ENCODE measurements at regions of chr3 and their contacts with region 1.

Region 1: DNA sequence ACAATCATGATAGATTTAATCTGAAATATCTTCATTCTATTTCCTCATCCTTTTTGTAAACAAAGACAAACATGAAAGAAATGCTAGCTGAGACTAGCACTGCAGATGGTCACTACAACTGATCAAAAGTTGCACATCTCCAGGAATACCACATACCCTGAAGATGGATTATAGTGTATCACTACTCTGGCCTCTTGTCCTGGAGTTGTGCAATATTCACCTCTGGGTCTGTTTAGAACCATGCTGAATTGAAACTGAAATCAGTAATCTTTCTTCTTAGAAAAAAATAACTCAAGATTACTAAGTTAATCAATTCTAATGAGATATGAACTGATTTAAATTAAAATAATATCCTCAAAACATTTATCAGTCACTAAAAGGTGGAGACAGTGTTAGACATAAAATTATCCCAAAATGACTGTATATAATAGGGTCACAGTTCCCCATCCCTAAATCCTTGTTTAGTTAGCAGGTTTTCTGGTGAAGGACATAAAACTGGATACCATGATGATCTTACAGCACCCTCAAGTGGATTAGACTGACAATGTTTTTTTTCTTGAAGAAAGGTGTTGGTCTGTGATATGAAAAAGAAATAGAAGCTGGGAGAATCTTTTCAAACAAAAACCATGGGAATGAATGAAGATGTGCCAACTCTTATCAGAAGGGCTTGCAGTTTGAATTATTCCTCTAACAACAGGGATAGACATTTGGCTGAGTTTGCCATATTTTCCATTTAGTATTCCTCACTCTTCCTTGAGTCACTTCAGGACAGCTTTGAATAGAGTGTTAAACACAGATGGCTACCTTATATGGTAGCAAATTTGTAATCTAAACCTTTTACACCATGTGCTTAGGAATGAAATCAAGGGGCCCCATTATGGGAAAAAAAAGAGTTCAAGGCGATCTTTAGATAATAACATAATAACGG is 7.1 kb upstream of the TTC14 start:
- DNase-seq: no peak
- H3K4me3 ChIP-seq: no peak overlapping the region
- H3K27ac ChIP-seq: no peak overlapping the region
- H3K4me1 ChIP-seq: no peaks in the 10 kb centered on the region
- H3K27me3 ChIP-seq: peaks cover 0 to 17% (median 0%) of the 10 kb centered on the region in 4 donors
- CTCF ChIP-seq: peak in 1 of 3 experiments; percentile 13
- EP300 ChIP-seq: no peak
- POLR2A ChIP-seq: no peak

Region 2: GRCh38 chr3:179929091-179929529 is 665.8 kb before region 1 on chr3:
- intact Hi-C with region 1: loop called (anchors 5 kb)
- DNase-seq: no peak
- H3K4me3 ChIP-seq: no peak overlapping the region
- H3K27ac ChIP-seq: no peak overlapping the region
- H3K4me1 ChIP-seq: no peaks in the 10 kb centered on the region
- H3K27me3 ChIP-seq: no peaks in the 10 kb centered on the region
- CTCF ChIP-seq: peak; percentile 31 to 62 (median 43)
- EP300 ChIP-seq: no peak
- POLR2A ChIP-seq: no peak

Region 3: GRCh38 chr3:180267202-180267843 is 327.6 kb before region 1 on chr3:
- intact Hi-C with region 1: no loop called
- DNase-seq: no peak
- H3K4me3 ChIP-seq: no peak overlapping the region
- H3K27ac ChIP-seq: no peak overlapping the region
- H3K4me1 ChIP-seq: no peaks in the 10 kb centered on the region
- H3K27me3 ChIP-seq: no peaks in the 10 kb centered on the region
- CTCF ChIP-seq: no peak
- EP300 ChIP-seq: no peak
- POLR2A ChIP-seq: no peak

Region 4: DNA sequence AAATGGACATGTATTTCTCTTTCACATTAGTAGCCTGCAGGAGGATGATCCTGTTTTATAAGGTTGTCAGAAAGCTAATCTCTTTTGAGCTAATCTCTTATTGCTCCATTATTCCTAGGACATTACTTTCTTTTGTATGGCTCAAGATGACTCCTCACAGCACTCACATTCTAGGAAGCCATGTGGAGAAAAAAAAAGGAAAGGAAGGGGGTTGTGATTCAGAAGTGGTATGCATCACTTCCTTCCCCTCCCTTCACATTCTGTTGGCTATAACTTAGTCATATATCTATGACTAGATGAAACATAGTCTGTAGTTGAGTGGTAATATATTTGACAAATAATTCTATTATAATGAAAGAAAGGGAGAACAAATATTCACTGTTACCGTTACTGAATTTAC is 161.7 kb before region 1 on chr3:
- intact Hi-C with region 1: no loop called
- DNase-seq: no peak
- H3K4me3 ChIP-seq: no peak overlapping the region
- H3K27ac ChIP-seq: no peak overlapping the region
- H3K4me1 ChIP-seq: no peaks in the 10 kb centered on the region
- H3K27me3 ChIP-seq: no peaks in the 10 kb centered on the region
- CTCF ChIP-seq: no peak
- EP300 ChIP-seq: no peak
- POLR2A ChIP-seq: no peak